ENCODE measurements at regions of chr17 and their contacts with region 1.

Region 1: GRCh38 chr17:54982399-54982798 is 13.8 kb downstream of the STXBP4 start:
- DNase-seq: no peak
- H3K4me3 ChIP-seq: no peak overlapping the region
- H3K27ac ChIP-seq: peak overlapping the region in 1 of 4 donors; percentile 33
- H3K4me1 ChIP-seq: no peaks in the 10 kb centered on the region
- H3K27me3 ChIP-seq: no peaks in the 10 kb centered on the region
- CTCF ChIP-seq: no peak
- POLR2A ChIP-seq: no peak

Region 2: DNA sequence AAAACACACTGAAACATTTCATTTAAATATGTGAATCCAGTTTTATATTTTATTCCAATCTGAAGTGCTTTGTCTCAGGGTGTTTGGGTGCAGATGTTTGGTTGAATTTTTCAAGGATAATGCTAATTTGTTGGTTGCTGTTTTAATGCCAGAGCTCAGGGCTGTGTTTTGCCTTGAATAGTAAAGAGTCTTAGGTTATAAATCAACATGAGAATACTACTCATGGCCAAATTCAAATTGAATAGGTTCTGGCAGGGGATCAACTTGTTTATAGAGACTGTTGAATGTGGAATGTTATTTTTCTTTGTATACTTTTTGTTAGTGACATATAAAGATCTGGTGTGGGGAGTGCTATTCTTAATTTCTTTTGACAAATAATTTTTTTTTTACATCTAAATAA is 63.0 kb before region 1 on chr17:
- intact Hi-C with region 1: no loop called
- DNase-seq: no peak
- H3K4me3 ChIP-seq: no peak overlapping the region
- H3K27ac ChIP-seq: no peak overlapping the region
- H3K4me1 ChIP-seq: no peaks in the 10 kb centered on the region
- H3K27me3 ChIP-seq: no peaks in the 10 kb centered on the region
- CTCF ChIP-seq: no peak
- POLR2A ChIP-seq: no peak

Region 3: GRCh38 chr17:55513885-55514591 is 531.6 kb after region 1 on chr17:
- intact Hi-C with region 1: loop called (anchors 10 kb)
- DNase-seq: no peak
- H3K4me3 ChIP-seq: no peak overlapping the region
- H3K27ac ChIP-seq: no peak overlapping the region
- H3K4me1 ChIP-seq: peaks cover 0 to 8% (median 6%) of the 10 kb centered on the region in 3 donors
- H3K27me3 ChIP-seq: no peaks in the 10 kb centered on the region
- CTCF ChIP-seq: peak; percentile 70 to 97 (median 88)
- POLR2A ChIP-seq: no peak

Measured in esophagus squamous epithelium (tissue), 5 donors.